CD4-positive, alpha-beta T cell (primary cell): ENCODE measurements at regions of chr13 and their contacts with region 1.

Region 1: DNA sequence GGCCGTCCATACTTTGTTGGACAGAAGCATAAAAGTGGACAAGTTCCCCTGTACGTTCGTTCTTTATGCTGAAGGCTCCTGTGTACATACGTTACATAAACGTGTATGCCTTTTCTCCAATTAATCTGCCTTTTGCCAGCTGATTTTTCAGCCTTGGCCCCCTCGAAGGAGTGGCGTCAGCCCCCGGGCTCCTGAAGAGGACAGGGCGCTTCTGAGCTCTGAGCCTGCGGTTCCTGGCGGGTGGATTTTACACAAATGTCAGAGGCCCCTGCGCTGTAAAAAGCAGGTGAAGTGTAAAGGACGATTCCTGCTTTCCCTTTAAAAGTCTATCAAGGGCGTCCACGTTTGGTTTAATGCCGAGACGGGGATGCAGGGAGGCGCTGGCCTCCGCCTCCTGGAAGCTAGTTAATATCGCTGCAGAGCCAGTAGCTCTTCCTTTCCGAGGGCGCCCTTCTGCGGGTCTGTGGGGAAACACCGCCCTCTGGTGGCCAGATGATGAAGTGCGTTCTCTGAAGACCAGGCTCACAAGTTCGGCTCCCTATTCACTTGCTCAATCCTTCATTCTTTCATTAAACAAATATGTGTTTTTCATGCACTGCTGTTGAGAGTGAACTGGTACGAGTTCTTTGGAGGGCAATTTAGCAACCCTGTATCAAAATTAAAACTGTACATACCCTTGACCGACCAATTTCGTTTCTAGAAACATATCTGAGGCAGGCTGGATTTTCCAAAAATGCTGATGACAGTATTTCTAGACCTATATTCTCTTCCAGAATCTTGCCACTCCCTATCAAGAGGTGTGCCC is 62.0 kb downstream of the GPR12 start:
- DNase-seq: peak; percentile 53 to 88 (median 76)
- ATAC-seq: peak; percentile 91
- H3K4me3 ChIP-seq: no peak overlapping the region
- H3K4me3 Mint-ChIP-seq: no peak overlapping the region
- H3K27ac ChIP-seq: no peak overlapping the region
- H3K27ac Mint-ChIP-seq: no peak overlapping the region
- H3K4me1 ChIP-seq: peaks cover 5% of the 10 kb centered on the region
- H3K4me1 Mint-ChIP-seq: no peaks in the 10 kb centered on the region
- H3K27me3 ChIP-seq: no peaks in the 10 kb centered on the region
- H3K27me3 Mint-ChIP-seq: peaks cover 13% of the 10 kb centered on the region
- CTCF ChIP-seq: peak; percentile 91

Region 2: DNA sequence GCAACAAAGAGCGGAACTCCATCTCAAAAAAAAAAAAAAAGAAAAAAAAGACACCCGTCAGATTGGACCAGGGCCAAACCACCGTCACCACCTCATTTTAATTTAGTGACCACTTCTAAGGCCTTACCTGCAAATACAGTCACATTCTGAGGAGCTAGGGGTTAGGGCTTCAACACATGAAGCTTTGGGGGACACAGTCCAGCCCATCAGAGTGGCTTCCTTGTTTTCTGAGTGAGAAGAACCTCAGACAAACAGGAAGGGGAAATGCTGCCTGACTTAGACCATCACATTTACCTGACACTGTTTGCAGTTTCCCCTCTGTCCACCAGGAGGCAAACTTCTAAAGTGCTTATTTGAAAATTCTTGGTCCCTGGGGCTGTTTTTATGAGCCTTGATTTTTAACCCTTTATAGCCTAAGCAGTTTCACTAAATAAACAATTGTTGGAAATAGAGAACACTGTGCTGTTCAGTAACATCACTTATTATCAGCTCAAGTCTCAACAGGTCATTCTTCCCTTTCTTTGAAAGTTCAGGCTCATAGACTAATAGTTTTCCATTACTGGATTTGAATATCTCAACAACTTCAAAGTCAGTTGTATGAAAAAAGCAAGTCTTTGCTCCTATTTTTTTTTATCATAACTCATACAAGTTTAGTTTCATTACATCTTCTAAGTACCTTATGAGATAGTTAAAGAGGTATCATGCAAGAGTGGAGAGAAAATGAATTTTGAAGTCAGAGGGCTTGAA is 216.0 kb before region 1 on chr13:
- CTCF ChIA-PET with region 1: interaction called, 3 read pairs
- POLR2A ChIA-PET with region 1: no interaction called
- intact Hi-C with region 1: loop called (anchors 1 to 2 kb)
- DNase-seq: peak; percentile 37 to 87 (median 54)
- ATAC-seq: peak; percentile 97
- H3K4me3 ChIP-seq: no peak overlapping the region
- H3K4me3 Mint-ChIP-seq: peak overlapping the region; percentile 16
- H3K27ac ChIP-seq: peak overlapping the region in 1 of 2 donors; percentile 60
- H3K27ac Mint-ChIP-seq: peak overlapping the region; percentile 79
- H3K4me1 ChIP-seq: peaks cover 23% of the 10 kb centered on the region
- H3K4me1 Mint-ChIP-seq: peaks cover 27% of the 10 kb centered on the region
- H3K27me3 ChIP-seq: no peaks in the 10 kb centered on the region
- H3K27me3 Mint-ChIP-seq: no peaks in the 10 kb centered on the region
- CTCF ChIP-seq: peak; percentile 85

Region 3: GRCh38 chr13:26498656-26499591 is 199.7 kb before region 1 on chr13:
- CTCF ChIA-PET with region 1: no interaction called
- POLR2A ChIA-PET with region 1: no interaction called
- intact Hi-C with region 1: loop called in 1 of 2 experiments (anchors 2 kb)
- DNase-seq: no peak
- ATAC-seq: no peak
- H3K4me3 ChIP-seq: no peak overlapping the region
- H3K4me3 Mint-ChIP-seq: no peak overlapping the region
- H3K27ac ChIP-seq: no peak overlapping the region
- H3K27ac Mint-ChIP-seq: no peak overlapping the region
- H3K4me1 ChIP-seq: no peaks in the 10 kb centered on the region
- H3K4me1 Mint-ChIP-seq: peaks cover 9% of the 10 kb centered on the region
- H3K27me3 ChIP-seq: peaks cover 0 to 4% of the 10 kb centered on the region in 2 experiments
- H3K27me3 Mint-ChIP-seq: peaks cover 10% of the 10 kb centered on the region
- CTCF ChIP-seq: no peak